ENCODE measurements at regions of chr9 and their contacts with region 1.

Region 1: DNA sequence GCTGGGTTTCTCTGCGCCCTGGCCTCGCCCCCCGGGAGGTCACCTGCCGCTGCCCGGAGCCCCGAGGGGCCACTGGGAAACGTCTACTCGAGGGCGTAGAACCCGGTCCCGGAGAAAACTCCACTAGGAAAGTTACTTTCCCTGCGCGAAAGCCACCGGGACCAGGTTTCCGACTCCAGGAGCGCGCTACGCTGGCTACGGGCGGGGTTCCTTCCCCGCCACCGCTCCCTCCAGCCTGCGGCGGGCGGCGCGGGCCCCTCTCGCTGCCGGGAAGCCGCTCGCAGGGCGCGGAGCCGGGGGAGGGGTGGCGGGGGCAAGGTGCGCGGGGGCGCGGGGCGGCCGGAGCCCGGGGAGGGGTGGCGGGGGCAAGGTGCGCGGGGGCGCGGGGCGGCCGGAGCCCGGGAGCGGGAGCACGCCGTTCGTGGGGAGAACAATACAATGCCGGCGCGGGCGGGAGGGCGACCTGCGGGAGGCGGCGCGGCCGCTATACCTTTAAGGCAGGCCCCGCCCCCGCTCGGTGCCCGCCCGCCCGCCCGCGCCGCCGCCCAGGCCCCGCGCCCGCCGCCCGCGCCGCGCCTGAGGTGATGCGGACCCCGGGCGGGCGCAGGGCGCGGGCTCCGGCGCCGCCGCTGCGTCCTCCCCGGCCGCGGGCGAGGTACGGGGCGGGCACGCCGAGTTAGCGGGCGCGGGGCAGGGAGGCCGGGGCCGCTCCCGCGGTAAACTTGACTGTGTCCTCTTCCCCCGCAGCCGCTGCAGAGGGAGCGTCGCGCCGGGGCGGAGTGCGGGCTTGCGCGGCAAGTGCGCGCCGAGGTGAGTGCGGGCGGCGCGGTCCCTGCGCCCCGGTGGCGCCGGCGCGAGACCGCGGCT is 278.1 kb downstream of the AOPEP start:
- DNase-seq: no peak

Region 2: DNA sequence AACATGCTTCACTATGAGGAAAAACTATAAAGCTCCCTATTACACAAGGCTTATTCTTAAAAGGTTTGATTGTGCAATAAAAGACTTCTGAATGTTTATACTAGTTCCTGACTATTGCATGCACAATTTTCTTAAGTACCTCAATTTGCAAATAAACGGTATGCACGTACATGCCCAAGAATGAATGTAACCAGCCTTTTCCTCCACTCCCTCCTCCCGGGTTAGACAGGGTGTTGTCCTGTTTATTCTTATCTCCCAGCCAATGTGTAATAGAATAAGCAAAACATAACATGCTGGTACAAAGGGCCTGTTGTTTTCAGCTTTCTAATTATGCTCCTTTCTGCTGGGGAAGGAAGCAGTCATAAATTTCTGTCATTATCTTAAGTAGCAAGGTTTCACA is 199.1 kb before region 1 on chr9:
- intact Hi-C with region 1: loop called in 1 of 2 experiments (anchors 2 kb)
- DNase-seq: no peak

Region 3: DNA sequence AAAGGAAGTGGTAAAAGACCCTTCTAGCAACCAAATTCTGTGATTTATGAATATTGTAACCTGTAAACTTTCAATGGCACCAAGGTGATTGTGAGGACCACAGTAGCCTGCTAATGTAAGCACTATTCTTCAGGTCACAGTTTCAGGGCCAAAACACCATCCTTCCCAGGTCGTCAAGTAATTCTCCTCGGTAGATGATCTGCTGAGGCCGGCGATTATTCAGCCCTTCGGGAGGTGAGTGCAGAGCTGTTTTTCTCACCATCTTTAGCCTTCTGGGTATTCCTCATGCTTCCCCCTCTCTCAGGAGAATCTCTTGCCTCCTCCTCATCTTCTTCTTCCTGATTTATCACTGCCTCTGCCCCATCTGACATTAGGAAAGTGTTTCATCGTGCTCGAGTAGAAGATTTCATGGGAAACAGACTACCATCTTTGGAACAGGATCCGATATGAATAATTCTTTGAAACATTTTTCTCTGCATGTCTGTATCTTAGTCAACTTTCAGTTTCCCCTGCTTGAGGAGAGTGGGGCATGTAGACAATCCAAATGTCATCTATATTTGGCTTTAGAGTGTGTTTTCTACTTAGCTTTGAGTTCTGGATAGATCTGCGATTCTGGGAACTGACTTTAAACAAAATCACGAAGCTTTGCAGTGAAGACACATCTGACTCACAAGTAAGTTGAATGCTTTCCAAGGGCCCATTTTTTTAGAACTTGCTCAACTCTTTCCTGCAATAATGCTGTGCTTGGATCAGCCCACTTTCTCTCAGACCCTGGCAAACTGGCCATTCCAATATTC is 104.2 kb before region 1 on chr9:
- intact Hi-C with region 1: loop called (anchors 5 to 10 kb)
- DNase-seq: no peak

Region 4: GRCh38 chr9:94908011-94908563 is 96.6 kb before region 1 on chr9:
- intact Hi-C with region 1: loop called (anchors 5 to 10 kb)
- DNase-seq: no peak

Measured in posterior vena cava (tissue), 2 donors.